GM10248 (cell line): ENCODE measurements at regions of chr5 and their contacts with region 1.

Region 1: GRCh38 chr5:127645300-127645726 is 3.6 kb upstream of the CTXN3 start:
- DNase-seq: no peak
- CTCF ChIP-seq: no peak

Region 2: GRCh38 chr5:127634007-127634406 is 11.3 kb before region 1 on chr5:
- CTCF ChIA-PET with region 1: interaction called, 11 read pairs
- POLR2A ChIA-PET with region 1: no interaction called
- DNase-seq: no peak
- CTCF ChIP-seq: no peak

Region 3: DNA sequence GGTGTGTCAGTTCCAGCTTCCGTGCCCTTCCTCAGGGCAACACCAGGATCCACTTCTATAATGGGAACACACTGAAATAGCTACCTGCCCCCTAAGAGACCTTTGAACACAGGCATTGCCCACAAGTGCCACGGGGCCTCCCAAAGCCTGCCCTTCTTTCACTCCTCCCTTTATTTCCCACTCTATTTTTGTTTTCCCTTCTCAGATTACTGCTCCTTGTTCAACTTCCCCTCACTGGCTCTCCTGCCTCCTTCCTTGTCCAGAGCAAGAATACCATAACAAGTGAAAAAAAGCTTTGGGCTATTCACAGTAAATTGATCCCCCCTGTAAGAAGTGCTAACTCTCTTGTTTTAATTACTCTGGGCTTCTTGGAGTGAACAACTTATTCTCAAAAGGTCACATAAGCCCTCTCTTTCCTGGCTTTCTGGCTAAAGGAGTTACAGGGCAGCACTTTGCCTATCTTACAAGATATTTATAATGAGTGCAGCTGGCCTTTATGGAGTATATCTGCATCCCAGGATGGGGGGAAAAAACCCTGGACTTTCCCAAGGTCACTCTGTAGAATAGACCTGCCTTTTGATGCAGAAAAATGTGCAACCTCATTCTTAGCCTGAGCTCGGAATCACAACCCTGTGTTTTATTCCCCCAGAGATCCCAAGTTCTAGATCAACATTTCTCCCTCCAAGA is 14.9 kb after region 1 on chr5:
- CTCF ChIA-PET with region 1: interaction called, 10 read pairs
- POLR2A ChIA-PET with region 1: no interaction called
- DNase-seq: no peak
- CTCF ChIP-seq: no peak

Region 4: DNA sequence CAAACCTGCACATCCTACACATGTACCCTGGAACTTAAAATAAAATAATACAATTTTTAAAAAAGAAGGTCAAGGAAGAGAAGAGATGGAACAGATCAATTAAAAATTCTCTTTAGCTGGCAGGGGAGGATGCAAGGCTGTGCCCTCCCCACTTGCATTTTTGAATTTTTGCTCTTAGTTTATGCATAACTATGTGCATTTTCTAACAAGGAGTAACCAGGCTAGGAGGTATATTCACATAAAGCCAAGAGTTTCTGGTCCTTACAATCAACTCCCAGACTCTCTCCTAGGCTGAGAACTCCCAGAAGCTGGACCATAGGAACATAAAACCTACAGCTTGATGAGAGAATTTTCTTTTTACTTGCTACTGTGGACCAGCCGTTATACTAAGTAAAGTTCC is 87.7 kb after region 1 on chr5:
- CTCF ChIA-PET with region 1: no interaction called
- POLR2A ChIA-PET with region 1: no interaction called
- DNase-seq: no peak
- CTCF ChIP-seq: no peak

Region 5: DNA sequence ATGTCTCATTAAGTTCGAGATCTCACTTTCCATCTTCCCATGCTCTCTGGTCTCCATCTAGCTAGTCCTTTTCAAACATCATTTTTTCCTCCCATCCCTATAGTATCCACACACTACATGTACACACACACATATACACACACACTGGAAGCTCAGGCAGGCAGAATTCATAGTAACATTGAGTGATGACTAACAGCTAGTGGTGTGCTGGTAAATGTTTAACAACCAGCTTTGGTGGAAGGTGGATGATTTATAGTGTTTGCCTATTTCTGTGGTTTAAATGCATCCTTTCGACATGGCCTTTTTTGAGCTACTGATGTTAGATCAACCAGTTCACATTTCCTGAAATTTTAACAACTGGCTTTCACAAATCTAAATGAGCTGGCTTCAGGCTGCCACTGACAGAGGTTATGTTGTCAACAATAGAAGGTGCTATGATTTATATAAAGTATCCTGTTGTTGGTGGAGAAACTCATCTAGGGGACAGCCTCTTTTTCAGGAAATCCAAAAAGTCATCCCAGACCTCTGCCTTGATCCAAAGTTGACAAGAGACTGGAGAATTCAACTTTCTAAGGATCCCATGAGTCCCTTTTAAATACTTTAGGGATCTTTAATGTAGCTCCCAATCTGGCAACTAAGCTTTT is 175.7 kb after region 1 on chr5:
- CTCF ChIA-PET with region 1: no interaction called
- POLR2A ChIA-PET with region 1: no interaction called
- DNase-seq: no peak
- CTCF ChIP-seq: no peak